WTC11 (cell line): ENCODE measurements at regions of chr6 and their contacts with region 1.

Region 1: DNA sequence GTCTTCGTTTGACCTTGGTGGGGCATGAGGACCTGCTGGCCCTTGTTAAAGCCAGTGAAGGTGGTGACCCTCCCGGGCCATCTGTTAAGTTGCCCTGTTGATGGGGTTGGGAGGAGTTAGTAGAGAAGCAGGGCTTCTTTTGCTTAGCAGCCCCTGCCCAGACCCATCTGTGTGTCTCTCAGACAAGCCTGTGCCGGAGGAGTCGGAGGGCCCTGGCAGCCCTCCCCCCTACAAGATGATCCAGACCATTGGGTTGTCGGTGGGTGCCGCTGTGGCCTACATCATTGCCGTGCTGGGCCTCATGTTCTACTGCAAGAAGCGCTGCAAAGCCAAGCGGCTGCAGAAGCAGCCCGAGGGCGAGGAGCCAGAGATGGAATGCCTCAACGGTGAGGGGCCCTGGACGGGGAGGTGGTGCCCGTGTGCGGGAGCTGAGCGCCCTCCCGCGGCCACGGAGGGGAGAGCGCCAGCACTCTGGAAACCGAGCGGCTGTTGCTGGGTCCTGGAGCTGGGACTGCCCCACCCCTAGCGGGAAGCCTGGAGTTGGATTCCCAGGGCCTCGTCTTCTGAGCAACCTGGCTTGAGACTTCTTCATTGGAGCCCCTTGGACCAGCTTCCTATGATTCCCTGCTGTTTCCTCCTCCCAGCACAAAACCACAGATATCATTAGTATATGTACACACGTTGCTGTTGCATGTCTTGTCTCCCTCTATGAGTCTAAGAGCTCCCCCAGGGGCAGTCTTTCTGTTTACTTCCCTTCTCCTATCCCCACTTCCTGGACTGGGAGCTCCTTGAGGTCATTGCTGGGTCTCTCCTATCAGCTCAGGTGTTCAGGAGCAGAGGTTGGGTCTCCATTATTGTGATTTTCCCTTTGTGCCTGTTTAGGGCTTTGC is 27.6 kb upstream of the SRF start:
- DNase-seq: peak; percentile 94
- ATAC-seq: peak; percentile 94
- H3K4me3 Mint-ChIP-seq: peak overlapping the region; percentile 14; the same call in 1 of the 2 replicates
- H3K27ac Mint-ChIP-seq: peak overlapping the region; percentile 90
- H3K4me1 Mint-ChIP-seq: peaks cover 10% of the 10 kb centered on the region
- H3K27me3 Mint-ChIP-seq: no peaks in the 10 kb centered on the region; the same call in 1 of the 2 replicates
- CTCF ChIP-seq: peak; percentile 92

Region 2: GRCh38 chr6:42963855-42964605 is 179.4 kb before region 1 on chr6:
- CTCF ChIA-PET with region 1: interaction called, 16 read pairs
- POLR2A ChIA-PET with region 1: no interaction called
- DNase-seq: peak; percentile 87
- ATAC-seq: peak; percentile 78
- H3K4me3 Mint-ChIP-seq: no peak overlapping the region
- H3K27ac Mint-ChIP-seq: no peak overlapping the region
- H3K4me1 Mint-ChIP-seq: peaks cover 11% of the 10 kb centered on the region; the same call in 1 of the 2 replicates
- H3K27me3 Mint-ChIP-seq: peaks cover 29% of the 10 kb centered on the region
- CTCF ChIP-seq: no peak

Region 3: GRCh38 chr6:43035495-43036194 is 107.8 kb before region 1 on chr6:
- CTCF ChIA-PET with region 1: interaction called, 10 read pairs
- POLR2A ChIA-PET with region 1: no interaction called
- DNase-seq: no peak
- ATAC-seq: no peak
- H3K4me3 Mint-ChIP-seq: no peak overlapping the region
- H3K27ac Mint-ChIP-seq: no peak overlapping the region
- H3K4me1 Mint-ChIP-seq: no peaks in the 10 kb centered on the region
- H3K27me3 Mint-ChIP-seq: no peaks in the 10 kb centered on the region
- CTCF ChIP-seq: no peak

Region 4: DNA sequence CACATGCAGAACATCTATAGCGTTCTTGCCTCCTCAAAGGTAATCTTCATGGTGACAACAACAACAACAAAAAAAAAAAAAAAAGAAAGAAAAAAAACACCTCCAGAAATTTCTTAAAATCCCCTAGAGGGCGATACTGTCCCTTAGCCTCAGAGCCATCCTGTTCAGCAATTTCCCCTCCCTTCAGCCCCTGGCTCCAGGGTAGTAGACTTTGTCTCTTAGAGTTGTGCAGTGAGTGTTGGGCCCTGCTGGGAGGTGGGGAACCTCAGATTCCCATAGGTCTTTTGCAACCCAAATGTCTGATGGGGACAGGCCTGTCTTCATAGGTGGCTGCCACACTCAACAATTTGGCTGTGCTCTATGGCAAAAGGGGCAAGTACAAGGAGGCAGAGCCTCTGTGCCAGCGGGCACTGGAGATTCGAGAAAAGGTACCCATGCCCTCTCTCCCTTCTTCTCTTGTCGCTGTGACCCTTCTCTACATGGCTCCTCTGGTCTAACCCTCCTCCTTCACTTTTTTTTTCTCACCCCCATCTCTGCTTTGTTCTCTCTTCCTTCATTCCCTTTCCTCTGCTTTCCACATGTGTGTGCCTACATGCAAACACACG is 73.3 kb before region 1 on chr6:
- CTCF ChIA-PET with region 1: interaction called, 50 read pairs
- POLR2A ChIA-PET with region 1: no interaction called
- DNase-seq: no peak
- ATAC-seq: peak; percentile 93
- H3K4me3 Mint-ChIP-seq: no peak overlapping the region
- H3K27ac Mint-ChIP-seq: peak overlapping the region; percentile 94
- H3K4me1 Mint-ChIP-seq: peaks cover 16% of the 10 kb centered on the region
- H3K27me3 Mint-ChIP-seq: no peaks in the 10 kb centered on the region; the same call in 1 of the 2 replicates
- CTCF ChIP-seq: no peak; the same call in 1 of the 2 replicates

Region 5: GRCh38 chr6:43089874-43090558 is 53.5 kb before region 1 on chr6:
- CTCF ChIA-PET with region 1: interaction called, 12 read pairs
- POLR2A ChIA-PET with region 1: no interaction called
- DNase-seq: no peak
- ATAC-seq: peak; percentile 43
- H3K4me3 Mint-ChIP-seq: peak overlapping the region; percentile 63
- H3K27ac Mint-ChIP-seq: peak overlapping the region; percentile 99
- H3K4me1 Mint-ChIP-seq: peaks cover 78% of the 10 kb centered on the region
- H3K27me3 Mint-ChIP-seq: no peaks in the 10 kb centered on the region
- CTCF ChIP-seq: no peak

Region 6: GRCh38 chr6:43174263-43175112 is 31.0 kb after region 1 on chr6:
- CTCF ChIA-PET with region 1: interaction called, 11 read pairs
- POLR2A ChIA-PET with region 1: interaction called, 8 read pairs
- DNase-seq: peak; percentile 97
- ATAC-seq: peak; percentile 70
- H3K4me3 Mint-ChIP-seq: peak overlapping the region; percentile 94
- H3K27ac Mint-ChIP-seq: peak overlapping the region; percentile 86
- H3K4me1 Mint-ChIP-seq: peaks cover 31% of the 10 kb centered on the region
- H3K27me3 Mint-ChIP-seq: peaks cover 10% of the 10 kb centered on the region
- CTCF ChIP-seq: no peak